GM18951 (cell line): ENCODE measurements at regions of chr3 and their contacts with region 1.

Region 1: GRCh38 chr3:43378066-43378935 is 92.0 kb downstream of the SNRK start:
- POLR2A ChIP-seq: no peak

Region 2: DNA sequence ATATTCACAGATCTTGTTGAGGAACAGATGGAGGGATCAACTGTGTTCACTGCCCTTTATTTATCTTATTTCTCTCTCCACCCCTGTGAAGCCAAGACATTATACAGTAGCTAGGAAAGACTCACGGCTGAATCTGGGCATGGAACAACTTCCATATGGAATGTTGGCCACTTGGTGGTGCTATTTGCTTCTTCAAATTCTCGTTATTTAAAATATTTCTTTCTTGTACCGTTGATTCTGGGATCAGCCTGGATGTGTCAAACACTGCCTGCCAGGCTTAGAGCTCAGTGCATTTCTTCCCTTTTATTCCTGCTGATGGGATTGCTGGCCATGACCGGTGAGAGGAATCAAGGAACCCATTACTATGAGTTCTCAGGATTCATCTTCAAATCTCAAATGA is 416.7 kb before region 1 on chr3:
- in situ Hi-C with region 1: loop called (anchors 25 kb)
- POLR2A ChIP-seq: no peak

Region 3: GRCh38 chr3:43162230-43163084 is 215.8 kb before region 1 on chr3:
- in situ Hi-C with region 1: loop called (anchors 10 kb)
- POLR2A ChIP-seq: no peak